ENCODE measurements at regions of chr14 and their contacts with region 1.

Region 1: GRCh38 chr14:64340560-64341196 is 46.5 kb upstream of the ESR2 start:
- DNase-seq: no peak
- CTCF ChIP-seq: no peak

Region 2: GRCh38 chr14:64496764-64497163 is 156.1 kb after region 1 on chr14:
- in situ Hi-C with region 1: loop called (anchors 10 kb)
- DNase-seq: no peak
- CTCF ChIP-seq: no peak

Region 3: GRCh38 chr14:64636208-64636979 is 295.7 kb after region 1 on chr14:
- in situ Hi-C with region 1: loop called (anchors 10 kb)
- DNase-seq: peak; percentile 84
- CTCF ChIP-seq: peak; percentile 80